ENCODE measurements at regions of chr11 and their contacts with region 1.

Region 1: DNA sequence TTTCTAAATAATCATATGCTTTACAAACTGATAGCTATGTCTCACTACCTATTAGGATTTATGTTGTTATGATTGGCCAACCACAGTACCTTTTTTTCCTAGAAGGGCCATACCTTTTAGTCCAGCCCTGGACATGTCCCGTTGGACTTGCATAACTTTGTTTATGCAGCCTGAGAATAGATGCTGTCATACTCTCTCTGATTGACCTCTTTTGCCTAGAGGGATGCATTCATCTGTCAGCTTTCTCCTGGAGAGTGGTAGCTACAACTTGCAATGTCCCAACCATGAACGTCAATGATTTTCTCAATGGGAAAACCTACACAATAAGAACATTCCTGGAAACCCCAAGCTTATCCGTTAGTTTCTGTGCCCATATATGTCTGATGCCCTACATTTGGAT is 12.9 kb downstream of the OR9I1 start:
- DNase-seq: no peak

Region 2: GRCh38 chr11:57964660-57965059 is 147.7 kb before region 1 on chr11:
- intact Hi-C with region 1: no loop called
- DNase-seq: no peak

Region 3: GRCh38 chr11:58562375-58562800 is 450.0 kb after region 1 on chr11:
- intact Hi-C with region 1: loop called in 1 of 2 experiments (anchors 5 kb)
- DNase-seq: no peak